Activated CD4-positive, alpha-beta T cell treated with anti-CD3 and anti-CD28 coated beads for 36 hours (primary cell): ENCODE measurements at regions of chr11 and their contacts with region 1.

Region 1: DNA sequence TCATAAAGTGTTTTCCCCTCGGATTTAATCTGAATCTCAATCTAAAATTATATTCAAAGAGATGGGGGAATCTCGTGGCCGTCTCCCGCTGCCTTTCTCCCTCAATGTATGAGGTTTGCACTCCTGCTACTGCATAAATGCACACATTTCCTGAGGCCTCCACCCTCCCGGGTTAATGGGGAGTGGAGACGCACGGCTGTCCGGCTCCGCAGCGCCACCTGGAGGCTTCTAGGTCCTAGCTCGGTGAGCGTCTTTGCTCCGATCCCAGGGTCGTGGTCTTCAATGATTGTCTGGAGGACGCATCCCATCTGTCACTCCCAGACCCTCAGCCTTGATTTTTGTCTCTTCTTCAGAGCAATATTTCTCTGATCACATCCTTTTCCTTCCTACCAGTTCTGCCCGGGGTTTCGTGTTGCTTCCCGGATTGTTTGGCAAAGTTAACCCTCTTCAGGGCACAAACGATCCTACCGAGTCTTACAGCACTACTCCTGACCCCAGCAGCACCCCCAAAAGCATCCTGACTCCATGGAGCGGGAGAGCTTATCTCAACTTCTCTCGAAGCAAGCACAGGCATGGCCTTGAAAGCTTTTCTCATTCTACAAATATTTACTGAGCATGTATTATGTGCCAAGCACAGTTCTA is at the start of gene LMO1:
- DNase-seq: peak; percentile 89
- ATAC-seq: peak; percentile 83
- H3K4me3 Mint-ChIP-seq: peak within 1 kb of the TSS; percentile 56
- H3K27ac Mint-ChIP-seq: no peak within 1 kb of the TSS
- H3K4me1 Mint-ChIP-seq: peaks cover 7% of the 10 kb centered on the region
- H3K27me3 Mint-ChIP-seq: peaks cover 64% of the 10 kb centered on the region
- total RNA-seq, gene LMO1: not detected

Region 2: DNA sequence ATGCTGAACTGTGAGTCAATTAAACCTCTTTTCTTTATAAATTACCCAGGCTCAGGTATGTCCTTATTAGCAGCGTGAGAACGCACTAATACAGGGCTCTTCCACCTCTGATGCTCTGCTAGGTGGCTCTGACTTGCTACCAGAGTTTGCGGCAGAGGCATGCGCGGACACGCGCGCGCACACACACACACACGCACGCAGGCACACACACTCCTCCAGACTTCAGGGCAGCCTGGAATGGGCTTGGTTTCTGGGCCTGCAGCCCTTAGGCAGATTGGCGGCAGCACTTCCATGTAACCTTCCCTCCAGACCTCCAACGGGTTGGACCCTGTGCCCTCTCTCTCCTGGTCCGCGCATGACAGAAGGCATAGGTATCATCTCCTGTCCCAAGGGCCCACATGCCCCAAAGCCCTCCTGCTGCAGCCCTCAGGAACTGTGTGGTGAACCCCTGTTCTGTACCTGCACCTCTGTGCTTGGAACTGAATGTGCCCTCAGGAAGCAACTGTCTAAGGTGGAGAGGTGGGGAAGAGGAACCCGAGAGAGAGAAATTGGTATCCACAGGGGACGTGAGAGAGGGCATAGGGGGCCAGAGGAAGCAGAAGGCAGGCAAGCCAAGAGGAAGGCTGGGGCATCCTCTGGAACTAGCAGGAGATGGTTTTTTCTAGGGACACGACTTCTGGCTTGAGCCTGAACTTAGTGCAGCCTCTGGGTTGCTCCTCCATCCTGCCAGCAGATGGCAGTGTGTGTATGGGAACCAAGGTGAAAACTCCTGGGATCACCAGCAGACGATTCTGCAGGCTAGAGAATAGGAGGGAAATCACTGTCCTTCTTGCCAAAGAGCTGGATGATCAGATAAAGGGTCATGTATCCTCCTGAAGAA is 71.6 kb before region 1 on chr11:
- CTCF ChIA-PET with region 1: interaction called, 15 read pairs
- POLR2A ChIA-PET with region 1: no interaction called
- intact Hi-C with region 1: loop called in 1 of 2 experiments (anchors 2 kb)
- DNase-seq: peak; percentile 72
- ATAC-seq: peak; percentile 64
- H3K4me3 Mint-ChIP-seq: no peak overlapping the region
- H3K27ac Mint-ChIP-seq: no peak overlapping the region
- H3K4me1 Mint-ChIP-seq: no peaks in the 10 kb centered on the region
- H3K27me3 Mint-ChIP-seq: peaks cover 14% of the 10 kb centered on the region

Region 3: DNA sequence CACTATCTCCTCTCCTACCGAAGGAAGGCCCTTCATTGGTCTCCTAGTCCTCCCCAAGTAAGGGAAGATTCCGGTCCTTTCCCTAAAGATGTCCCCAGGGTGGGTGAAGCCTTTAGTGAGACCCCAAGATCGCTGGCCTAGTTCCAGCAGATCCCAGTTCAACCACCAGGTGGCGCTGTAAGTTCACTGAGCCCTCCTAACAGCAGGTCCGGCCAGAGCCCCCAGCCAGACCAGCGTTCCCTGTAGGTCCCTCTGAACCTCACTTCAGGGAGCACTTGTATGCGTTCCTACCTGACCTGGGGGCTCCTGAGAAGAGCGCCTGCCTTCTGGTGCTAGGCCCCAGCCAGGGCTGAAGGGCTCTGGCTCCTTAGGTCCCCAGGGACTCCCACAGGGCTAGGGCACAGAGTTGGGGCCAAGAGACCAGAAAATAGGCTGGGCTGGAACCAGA is 38.3 kb before region 1 on chr11:
- CTCF ChIA-PET with region 1: interaction called, 5 read pairs
- POLR2A ChIA-PET with region 1: no interaction called
- intact Hi-C with region 1: loop called (anchors 1 to 2 kb)
- DNase-seq: peak; percentile 82
- ATAC-seq: peak; percentile 70
- H3K4me3 Mint-ChIP-seq: no peak overlapping the region
- H3K27ac Mint-ChIP-seq: no peak overlapping the region
- H3K4me1 Mint-ChIP-seq: no peaks in the 10 kb centered on the region
- H3K27me3 Mint-ChIP-seq: no peaks in the 10 kb centered on the region

Region 4: DNA sequence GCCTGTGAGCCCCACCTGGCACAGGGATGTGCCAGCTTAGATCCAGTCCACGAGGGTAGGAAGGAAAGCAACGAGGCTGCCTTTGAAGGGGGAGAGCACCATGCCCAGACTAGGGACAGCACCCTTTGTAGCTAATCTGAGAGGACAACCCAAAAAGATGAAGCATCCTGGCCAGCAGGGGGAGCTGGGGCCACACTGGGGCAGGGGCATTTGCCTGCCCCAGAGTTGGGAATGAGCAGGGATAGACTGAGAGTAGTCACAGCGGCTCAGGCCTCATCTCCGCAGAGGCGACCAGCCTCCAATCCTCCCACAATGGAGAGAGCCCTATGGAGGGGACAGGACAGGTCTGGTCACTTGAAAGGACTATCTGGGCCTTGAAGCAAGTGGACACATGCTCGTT is 16.6 kb before region 1 on chr11:
- CTCF ChIA-PET with region 1: interaction called, 45 read pairs
- POLR2A ChIA-PET with region 1: no interaction called
- intact Hi-C with region 1: no loop called
- DNase-seq: peak; percentile 59
- ATAC-seq: peak; percentile 47
- H3K4me3 Mint-ChIP-seq: no peak overlapping the region
- H3K27ac Mint-ChIP-seq: no peak overlapping the region
- H3K4me1 Mint-ChIP-seq: no peaks in the 10 kb centered on the region
- H3K27me3 Mint-ChIP-seq: peaks cover 4% of the 10 kb centered on the region

Region 5: GRCh38 chr11:8252388-8252787 is 11.5 kb before region 1 on chr11:
- CTCF ChIA-PET with region 1: interaction called, 45 read pairs
- POLR2A ChIA-PET with region 1: no interaction called
- intact Hi-C with region 1: no loop called
- DNase-seq: no peak
- ATAC-seq: no peak
- H3K4me3 Mint-ChIP-seq: no peak overlapping the region
- H3K27ac Mint-ChIP-seq: no peak overlapping the region
- H3K4me1 Mint-ChIP-seq: no peaks in the 10 kb centered on the region
- H3K27me3 Mint-ChIP-seq: no peaks in the 10 kb centered on the region